Right cardiac atrium (tissue), 5 donors: ENCODE measurements at regions of chr12 and their contacts with region 1.

Region 1: DNA sequence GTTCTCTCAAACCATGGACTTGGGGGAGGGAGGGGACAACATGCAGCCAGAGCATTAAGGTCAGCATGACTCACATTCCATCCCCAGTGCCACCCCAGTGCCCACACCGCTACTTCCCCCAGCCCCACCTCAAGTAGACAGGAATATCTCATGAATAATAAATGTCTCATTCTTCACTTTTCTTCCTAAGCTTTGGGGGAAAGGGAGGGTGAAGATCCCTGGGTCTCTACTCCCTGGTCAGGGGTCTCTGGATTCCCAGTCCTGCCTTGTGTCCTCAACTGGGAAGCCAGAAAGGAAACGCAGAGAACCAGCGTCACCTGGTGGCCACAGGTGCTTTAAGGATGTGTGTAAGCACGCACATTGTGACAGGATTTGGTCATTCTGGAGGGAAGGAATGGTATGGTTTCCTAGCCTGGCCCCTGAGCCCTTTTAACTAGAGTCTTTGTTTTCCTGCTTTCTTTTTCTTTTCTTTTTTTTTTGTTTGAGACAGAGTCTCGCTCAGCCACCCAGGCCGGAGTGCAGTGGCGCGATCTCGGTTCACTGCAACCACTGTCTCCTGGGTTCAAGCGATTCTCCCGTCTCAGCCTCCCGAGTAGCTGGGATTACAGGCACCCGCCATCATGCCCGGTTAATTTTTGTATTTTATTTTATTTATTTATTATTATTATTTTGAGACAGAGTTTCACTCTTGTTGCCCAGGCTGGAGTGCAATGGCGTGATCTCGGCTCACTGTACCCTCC is 3.4 kb downstream of the GPR84 start:
- DNase-seq: peak; percentile 61 to 91 (median 84)
- ATAC-seq: no peak
- H3K4me3 ChIP-seq: no peak overlapping the region
- H3K27ac ChIP-seq: no peak overlapping the region
- H3K4me1 ChIP-seq: peaks cover 3% of the 10 kb centered on the region
- H3K27me3 ChIP-seq: no peaks in the 10 kb centered on the region

Region 2: GRCh38 chr12:54214553-54215406 is 146.1 kb before region 1 on chr12:
- intact Hi-C with region 1: loop called in 3 of 4 experiments (anchors 5 to 10 kb)
- DNase-seq: peak; percentile 89 to 94 (median 92)
- ATAC-seq: peak; percentile 86
- H3K4me3 ChIP-seq: no peak overlapping the region
- H3K27ac ChIP-seq: no peak overlapping the region
- H3K4me1 ChIP-seq: peaks cover 5% of the 10 kb centered on the region
- H3K27me3 ChIP-seq: no peaks in the 10 kb centered on the region

Region 3: GRCh38 chr12:54220092-54220557 is 140.8 kb before region 1 on chr12:
- intact Hi-C with region 1: loop called (anchors 5 to 10 kb)
- DNase-seq: peak; percentile 50 to 84 (median 72)
- ATAC-seq: peak; percentile 50 to 61
- H3K4me3 ChIP-seq: no peak overlapping the region
- H3K27ac ChIP-seq: no peak overlapping the region
- H3K4me1 ChIP-seq: peaks cover 5% of the 10 kb centered on the region
- H3K27me3 ChIP-seq: no peaks in the 10 kb centered on the region